Activated CD4-positive, alpha-beta memory T cell treated with anti-CD3 and anti-CD28 coated beads for 36 hours (primary cell): ENCODE measurements at regions of chr12 and their contacts with region 1.

Region 1: GRCh38 chr12:53952871-53953734 is 1.6 kb upstream of the HOXC12 start:
- DNase-seq: no peak
- H3K4me3 Mint-ChIP-seq: peak overlapping the region; percentile 25
- H3K27ac Mint-ChIP-seq: no peak overlapping the region
- H3K4me1 Mint-ChIP-seq: peaks cover 19% of the 10 kb centered on the region
- H3K27me3 Mint-ChIP-seq: peaks cover 85% of the 10 kb centered on the region

Region 2: GRCh38 chr12:53974084-53975063 is 21.3 kb after region 1 on chr12 and contains the start of gene HOTAIR:
- CTCF ChIA-PET with region 1: no interaction called
- POLR2A ChIA-PET with region 1: no interaction called
- intact Hi-C with region 1: loop called (anchors 2 kb)
- DNase-seq: peak; percentile 45
- H3K4me3 Mint-ChIP-seq: peak within 1 kb of the TSS; percentile 50
- H3K27ac Mint-ChIP-seq: peak within 1 kb of the TSS; percentile 50
- H3K4me1 Mint-ChIP-seq: peaks cover 22% of the 10 kb centered on the region
- H3K27me3 Mint-ChIP-seq: peaks cover 84% of the 10 kb centered on the region
- total RNA-seq, gene HOTAIR: not detected

Region 3: DNA sequence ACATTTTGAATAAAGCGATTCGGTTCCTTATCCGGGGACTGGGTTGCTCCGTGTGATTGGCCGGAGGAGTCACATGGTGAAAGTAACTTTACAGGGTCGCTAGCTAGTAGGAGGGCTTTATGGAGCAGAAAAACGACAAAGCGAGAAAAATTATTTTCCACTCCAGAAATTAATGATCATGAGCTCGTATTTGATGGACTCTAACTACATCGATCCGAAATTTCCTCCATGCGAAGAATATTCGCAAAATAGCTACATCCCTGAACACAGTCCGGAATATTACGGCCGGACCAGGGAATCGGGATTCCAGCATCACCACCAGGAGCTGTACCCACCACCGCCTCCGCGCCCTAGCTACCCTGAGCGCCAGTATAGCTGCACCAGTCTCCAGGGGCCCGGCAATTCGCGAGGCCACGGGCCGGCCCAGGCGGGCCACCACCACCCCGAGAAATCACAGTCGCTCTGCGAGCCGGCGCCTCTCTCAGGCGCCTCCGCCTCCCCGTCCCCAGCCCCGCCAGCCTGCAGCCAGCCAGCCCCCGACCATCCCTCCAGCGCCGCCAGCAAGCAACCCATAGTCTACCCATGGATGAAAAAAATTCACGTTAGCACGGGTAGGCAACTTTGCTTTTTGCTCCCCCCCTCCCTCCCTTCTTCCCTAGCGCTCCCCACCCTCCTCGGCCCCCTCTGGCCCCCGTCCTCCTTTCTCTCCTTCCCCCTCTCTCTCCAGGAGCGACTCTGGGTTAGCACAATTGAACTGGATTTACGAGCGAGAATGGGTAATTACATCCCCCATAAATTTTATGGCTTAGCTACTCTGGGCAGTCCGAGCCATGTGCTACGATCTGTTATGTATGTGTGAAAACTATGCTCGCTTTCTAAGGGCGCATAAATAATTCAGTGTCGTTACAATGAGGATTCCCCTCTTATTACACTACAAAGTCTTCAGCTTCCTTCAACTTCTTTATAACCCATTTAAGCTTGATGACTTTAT is 100.9 kb after region 1 on chr12 and contains the start of gene HOXC4:
- CTCF ChIA-PET with region 1: no interaction called
- POLR2A ChIA-PET with region 1: no interaction called
- intact Hi-C with region 1: loop called (anchors 5 kb)
- DNase-seq: no peak
- H3K4me3 Mint-ChIP-seq: peak within 1 kb of the TSS; percentile 33
- H3K27ac Mint-ChIP-seq: no peak within 1 kb of the TSS
- H3K4me1 Mint-ChIP-seq: peaks cover 28% of the 10 kb centered on the region
- H3K27me3 Mint-ChIP-seq: peaks cover 78% of the 10 kb centered on the region
- total RNA-seq, gene HOXC4: 0.17 TPM in 1 of 2 experiments, not detected in the other

Region 4: DNA sequence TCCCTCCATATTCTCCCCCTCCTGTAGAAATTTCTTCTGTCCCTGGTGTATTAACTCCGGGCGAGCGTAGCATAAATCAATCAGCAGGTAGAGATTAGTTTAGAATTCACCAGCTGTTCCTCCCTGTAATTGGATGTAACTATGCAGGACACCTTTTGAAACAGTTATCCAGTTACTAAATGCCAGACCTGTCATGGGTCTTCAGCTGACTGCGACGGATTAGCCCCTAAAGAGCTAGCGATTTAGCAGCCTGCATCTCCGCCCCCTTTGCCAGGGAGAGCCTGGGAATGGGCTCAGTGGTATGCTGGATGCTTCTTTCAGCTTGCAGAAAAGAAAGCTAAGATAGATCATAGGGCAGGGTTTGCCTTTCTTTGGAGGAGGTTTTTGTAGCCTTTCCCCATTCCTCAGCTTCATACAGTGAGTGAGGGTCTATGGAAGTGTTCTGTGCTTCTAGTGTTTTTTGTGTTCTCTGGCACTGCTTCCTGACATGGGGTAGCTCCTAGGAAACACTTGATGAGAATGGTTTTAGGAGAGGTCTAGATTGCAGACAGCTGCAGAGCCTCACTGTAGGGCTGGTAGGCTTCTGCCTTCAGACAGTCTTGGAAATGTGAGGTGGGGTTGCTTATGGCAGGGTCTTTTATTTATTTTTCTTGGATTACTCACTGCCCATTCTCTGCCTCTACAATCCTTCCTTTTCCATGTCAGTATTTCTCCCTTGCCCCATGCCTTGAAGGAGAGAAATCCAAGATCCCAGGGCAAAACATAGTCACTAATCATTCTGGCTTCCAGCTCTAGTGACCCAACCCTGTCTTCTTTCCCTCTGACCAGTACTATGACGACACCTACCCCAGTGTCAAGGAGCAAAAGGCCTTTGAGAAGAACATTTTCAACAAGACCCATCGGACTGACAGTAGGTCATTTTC is 388.5 kb after region 1 on chr12:
- CTCF ChIA-PET with region 1: no interaction called
- POLR2A ChIA-PET with region 1: no interaction called
- intact Hi-C with region 1: no loop called
- DNase-seq: no peak
- H3K4me3 Mint-ChIP-seq: no peak overlapping the region
- H3K27ac Mint-ChIP-seq: no peak overlapping the region
- H3K4me1 Mint-ChIP-seq: peaks cover 8% of the 10 kb centered on the region
- H3K27me3 Mint-ChIP-seq: no peaks in the 10 kb centered on the region